MCF 10A (cell line): ENCODE measurements at regions of chr20 and their contacts with region 1.

Region 1: DNA sequence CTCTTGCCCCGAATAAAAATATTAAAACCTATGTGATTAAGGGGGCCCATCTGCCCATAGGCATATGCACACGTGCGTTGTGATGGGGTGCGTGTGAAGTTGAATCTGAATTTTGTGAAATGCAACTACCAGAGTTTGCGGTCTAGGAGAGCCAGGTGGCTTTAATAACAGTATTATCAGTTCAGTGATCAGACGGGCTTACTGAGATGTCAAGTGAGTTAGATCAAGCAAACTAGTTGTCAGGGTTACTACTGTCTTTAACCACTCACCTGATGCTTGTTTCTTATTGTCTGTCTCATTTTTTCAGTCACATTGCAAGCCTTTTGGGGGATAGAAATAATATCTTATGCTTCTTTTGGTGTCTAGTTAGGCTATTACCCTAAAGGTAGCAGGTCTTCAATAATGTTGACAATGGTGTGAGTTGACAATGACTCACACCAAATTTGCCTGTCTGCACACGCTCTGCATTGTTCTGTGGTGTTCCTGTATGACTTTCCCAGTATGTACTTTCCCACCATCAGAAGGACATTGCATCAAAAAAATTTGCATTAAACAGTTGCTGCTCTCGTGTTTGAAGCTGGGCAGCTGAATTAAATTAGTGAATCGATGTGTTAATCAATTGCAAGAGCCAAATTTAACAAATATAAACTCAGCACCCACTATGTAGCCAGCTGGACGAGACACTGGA is 103.1 kb upstream of the NAA20 start:
- DNase-seq: peak; percentile 94
- H3K4me3 Mint-ChIP-seq: no peak overlapping the region
- H3K27ac Mint-ChIP-seq: peak overlapping the region; percentile 82
- H3K4me1 Mint-ChIP-seq: peaks cover 46% of the 10 kb centered on the region
- H3K27me3 Mint-ChIP-seq: no peaks in the 10 kb centered on the region
- CTCF ChIP-seq: no peak

Region 2: GRCh38 chr20:19644085-19644484 is 270.0 kb before region 1 on chr20:
- CTCF ChIA-PET with region 1: no interaction called
- POLR2A ChIA-PET with region 1: no interaction called
- intact Hi-C with region 1: no loop called
- DNase-seq: no peak
- H3K4me3 Mint-ChIP-seq: no peak overlapping the region
- H3K27ac Mint-ChIP-seq: no peak overlapping the region
- H3K4me1 Mint-ChIP-seq: no peaks in the 10 kb centered on the region
- H3K27me3 Mint-ChIP-seq: peaks cover 17% of the 10 kb centered on the region
- CTCF ChIP-seq: no peak

Region 3: GRCh38 chr20:19903168-19903811 is 10.8 kb before region 1 on chr20:
- CTCF ChIA-PET with region 1: interaction called, 12 read pairs
- POLR2A ChIA-PET with region 1: interaction called, 8 read pairs
- intact Hi-C with region 1: no loop called
- DNase-seq: peak; percentile 30
- H3K4me3 Mint-ChIP-seq: no peak overlapping the region
- H3K27ac Mint-ChIP-seq: no peak overlapping the region
- H3K4me1 Mint-ChIP-seq: peaks cover 5% of the 10 kb centered on the region
- H3K27me3 Mint-ChIP-seq: no peaks in the 10 kb centered on the region
- CTCF ChIP-seq: no peak

Region 4: GRCh38 chr20:19928328-19929011 is 14.4 kb after region 1 on chr20:
- CTCF ChIA-PET with region 1: interaction called, 11 read pairs
- POLR2A ChIA-PET with region 1: interaction called, 90 read pairs
- intact Hi-C with region 1: no loop called
- DNase-seq: peak; percentile 97
- H3K4me3 Mint-ChIP-seq: peak overlapping the region; percentile 14
- H3K27ac Mint-ChIP-seq: peak overlapping the region; percentile 90
- H3K4me1 Mint-ChIP-seq: peaks cover 19% of the 10 kb centered on the region
- H3K27me3 Mint-ChIP-seq: no peaks in the 10 kb centered on the region
- CTCF ChIP-seq: no peak

Region 5: GRCh38 chr20:19934792-19935491 is 20.9 kb after region 1 on chr20:
- CTCF ChIA-PET with region 1: no interaction called
- POLR2A ChIA-PET with region 1: interaction called, 15 read pairs
- intact Hi-C with region 1: no loop called
- DNase-seq: peak; percentile 70
- H3K4me3 Mint-ChIP-seq: peak overlapping the region; percentile 69
- H3K27ac Mint-ChIP-seq: peak overlapping the region; percentile 71
- H3K4me1 Mint-ChIP-seq: peaks cover 15% of the 10 kb centered on the region
- H3K27me3 Mint-ChIP-seq: no peaks in the 10 kb centered on the region
- CTCF ChIP-seq: no peak

Region 6: DNA sequence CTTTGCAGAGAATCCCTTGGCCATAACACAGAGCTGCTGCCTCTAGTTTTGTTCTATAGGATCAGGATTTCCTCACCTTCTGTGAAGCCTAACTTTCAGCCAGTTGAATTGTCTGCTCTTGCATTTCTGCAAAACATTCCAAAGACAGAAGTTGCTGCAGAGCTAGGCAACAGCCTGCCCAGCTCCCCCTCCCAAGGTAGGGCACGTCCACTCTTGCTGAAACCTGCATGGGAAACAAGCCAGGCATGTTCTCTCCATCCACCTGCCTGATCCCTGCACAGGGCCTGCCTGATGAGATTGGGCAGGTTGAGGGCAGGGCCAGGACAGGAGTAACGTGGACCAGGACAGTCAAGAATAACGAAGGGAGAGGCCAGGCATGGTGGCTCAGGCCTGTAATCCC is 44.1 kb after region 1 on chr20:
- CTCF ChIA-PET with region 1: interaction called, 4 read pairs
- POLR2A ChIA-PET with region 1: interaction called, 22 read pairs
- intact Hi-C with region 1: no loop called
- DNase-seq: peak; percentile 67
- H3K4me3 Mint-ChIP-seq: no peak overlapping the region
- H3K27ac Mint-ChIP-seq: peak overlapping the region; percentile 61
- H3K4me1 Mint-ChIP-seq: peaks cover 6% of the 10 kb centered on the region
- H3K27me3 Mint-ChIP-seq: no peaks in the 10 kb centered on the region
- CTCF ChIP-seq: no peak

Region 7: GRCh38 chr20:19964289-19965263 is 50.5 kb after region 1 on chr20:
- CTCF ChIA-PET with region 1: interaction called, 4 read pairs
- POLR2A ChIA-PET with region 1: interaction called, 22 read pairs
- intact Hi-C with region 1: no loop called
- DNase-seq: peak; percentile 80
- H3K4me3 Mint-ChIP-seq: no peak overlapping the region
- H3K27ac Mint-ChIP-seq: peak overlapping the region; percentile 87
- H3K4me1 Mint-ChIP-seq: peaks cover 15% of the 10 kb centered on the region
- H3K27me3 Mint-ChIP-seq: no peaks in the 10 kb centered on the region
- CTCF ChIP-seq: no peak